ENCODE measurements at regions of chr18 and their contacts with region 1.

Region 1: GRCh38 chr18:34787931-34788532 is 77.9 kb downstream of the DTNA start:
- DNase-seq: peak; percentile 60
- ATAC-seq: peak; percentile 67
- H3K4me3 ChIP-seq: no peak overlapping the region
- H3K27ac ChIP-seq: no peak overlapping the region
- H3K4me1 ChIP-seq: no peaks in the 10 kb centered on the region
- H3K27me3 ChIP-seq: no peaks in the 10 kb centered on the region
- CTCF ChIP-seq: peak; percentile 77
- EP300 ChIP-seq: no peak
- POLR2A ChIP-seq: no peak
- RAD21 ChIP-seq: 0 out of 2 replicates have a peak, but pooled peaks have one; percentile 19

Region 2: DNA sequence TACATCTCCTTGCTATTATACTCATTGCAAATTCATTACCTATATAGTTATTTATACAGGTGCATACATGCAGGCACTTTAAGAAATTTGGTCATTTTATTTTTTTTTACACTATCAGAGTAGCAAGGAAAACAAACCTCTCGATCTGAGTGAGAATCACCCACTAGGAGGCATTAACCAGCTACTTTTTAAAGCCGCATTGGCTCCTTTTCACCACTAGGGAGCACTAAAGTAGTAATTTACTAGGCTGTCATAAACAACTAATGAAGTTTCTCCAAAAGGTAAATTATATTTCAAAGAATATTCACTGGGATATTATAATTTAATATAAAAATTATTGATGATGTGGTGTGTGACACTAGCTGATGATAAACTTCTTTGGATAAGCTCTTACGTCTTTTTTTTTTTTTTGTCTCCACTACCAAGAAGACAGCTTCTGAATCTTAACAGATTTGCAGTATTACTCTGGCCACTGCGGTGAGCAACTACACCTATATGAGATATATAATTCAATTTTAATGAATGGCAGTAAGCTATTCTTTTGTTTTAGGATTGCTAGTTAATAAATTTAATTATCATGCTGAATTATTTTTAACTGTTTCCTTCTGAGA is 665.2 kb before region 1 on chr18:
- CTCF ChIA-PET with region 1: interaction called, 3 read pairs
- POLR2A ChIA-PET with region 1: no interaction called
- in situ Hi-C with region 1: no loop called
- intact Hi-C with region 1: loop called (anchors 5 kb)
- DNase-seq: peak; percentile 36
- ATAC-seq: peak; percentile 73
- H3K4me3 ChIP-seq: no peak overlapping the region
- H3K27ac ChIP-seq: no peak overlapping the region
- H3K4me1 ChIP-seq: peaks cover 13% of the 10 kb centered on the region
- H3K27me3 ChIP-seq: no peaks in the 10 kb centered on the region
- CTCF ChIP-seq: peak; percentile 65
- EP300 ChIP-seq: no peak
- POLR2A ChIP-seq: no peak
- RAD21 ChIP-seq: no peak

Region 3: GRCh38 chr18:34352385-34353163 is 435.5 kb before region 1 on chr18:
- CTCF ChIA-PET with region 1: interaction called, 3 read pairs
- POLR2A ChIA-PET with region 1: no interaction called
- in situ Hi-C with region 1: loop called (anchors 5 kb)
- intact Hi-C with region 1: loop called (anchors 1 kb)
- DNase-seq: peak; percentile 22
- ATAC-seq: no peak
- H3K4me3 ChIP-seq: no peak overlapping the region
- H3K27ac ChIP-seq: no peak overlapping the region
- H3K4me1 ChIP-seq: no peaks in the 10 kb centered on the region
- H3K27me3 ChIP-seq: no peaks in the 10 kb centered on the region
- CTCF ChIP-seq: peak; percentile 39
- EP300 ChIP-seq: no peak
- POLR2A ChIP-seq: no peak
- RAD21 ChIP-seq: no peak

Region 4: GRCh38 chr18:34595673-34596303 is 192.2 kb before region 1 on chr18:
- CTCF ChIA-PET with region 1: interaction called, 7 read pairs
- POLR2A ChIA-PET with region 1: no interaction called
- in situ Hi-C with region 1: no loop called
- intact Hi-C with region 1: loop called (anchors 5 kb)
- DNase-seq: peak; percentile 20
- ATAC-seq: no peak
- H3K4me3 ChIP-seq: no peak overlapping the region
- H3K27ac ChIP-seq: no peak overlapping the region
- H3K4me1 ChIP-seq: no peaks in the 10 kb centered on the region
- H3K27me3 ChIP-seq: no peaks in the 10 kb centered on the region
- CTCF ChIP-seq: 0 out of 2 replicates have a peak, but pooled peaks have one; percentile 38
- EP300 ChIP-seq: no peak
- POLR2A ChIP-seq: no peak
- RAD21 ChIP-seq: no peak

Region 5: GRCh38 chr18:34661464-34662111 is 126.4 kb before region 1 on chr18:
- CTCF ChIA-PET with region 1: interaction called, 9 read pairs
- POLR2A ChIA-PET with region 1: no interaction called
- in situ Hi-C with region 1: loop called (anchors 10 kb)
- intact Hi-C with region 1: loop called (anchors 1 kb)
- DNase-seq: peak; percentile 48
- ATAC-seq: peak; percentile 90
- H3K4me3 ChIP-seq: no peak overlapping the region
- H3K27ac ChIP-seq: no peak overlapping the region
- H3K4me1 ChIP-seq: peaks cover 11% of the 10 kb centered on the region
- H3K27me3 ChIP-seq: no peaks in the 10 kb centered on the region
- CTCF ChIP-seq: peak; percentile 73
- EP300 ChIP-seq: no peak
- POLR2A ChIP-seq: no peak
- RAD21 ChIP-seq: no peak; the same call in 1 of the 2 replicates

Region 6: DNA sequence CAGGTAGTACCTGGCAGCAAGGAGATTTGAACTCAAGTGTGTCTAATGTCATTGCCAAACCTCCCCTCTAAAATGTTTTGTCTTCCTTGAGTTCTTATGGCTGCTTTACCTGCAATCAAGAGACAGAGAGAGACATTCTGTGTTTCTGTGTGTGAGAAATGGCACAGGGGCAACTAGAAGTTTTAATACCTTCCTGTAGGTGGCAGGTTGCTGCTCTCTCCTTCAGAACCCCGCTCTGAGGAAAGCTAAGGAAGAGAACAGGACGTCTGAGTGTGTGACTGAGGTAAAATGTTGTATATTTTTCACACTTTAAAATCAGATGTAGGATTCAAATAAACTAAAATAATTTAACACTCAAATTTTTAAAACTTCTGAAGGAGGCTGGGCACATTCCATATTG is 58.8 kb before region 1 on chr18:
- CTCF ChIA-PET with region 1: interaction called, 4 read pairs
- POLR2A ChIA-PET with region 1: no interaction called
- in situ Hi-C with region 1: no loop called
- intact Hi-C with region 1: loop called (anchors 2 kb)
- DNase-seq: peak; percentile 23
- ATAC-seq: peak; percentile 93
- H3K4me3 ChIP-seq: no peak overlapping the region
- H3K27ac ChIP-seq: no peak overlapping the region
- H3K4me1 ChIP-seq: no peaks in the 10 kb centered on the region
- H3K27me3 ChIP-seq: no peaks in the 10 kb centered on the region; a peak in 1 of 5 replicates
- CTCF ChIP-seq: peak; percentile 52
- EP300 ChIP-seq: no peak
- POLR2A ChIP-seq: no peak
- RAD21 ChIP-seq: no peak

Region 7: DNA sequence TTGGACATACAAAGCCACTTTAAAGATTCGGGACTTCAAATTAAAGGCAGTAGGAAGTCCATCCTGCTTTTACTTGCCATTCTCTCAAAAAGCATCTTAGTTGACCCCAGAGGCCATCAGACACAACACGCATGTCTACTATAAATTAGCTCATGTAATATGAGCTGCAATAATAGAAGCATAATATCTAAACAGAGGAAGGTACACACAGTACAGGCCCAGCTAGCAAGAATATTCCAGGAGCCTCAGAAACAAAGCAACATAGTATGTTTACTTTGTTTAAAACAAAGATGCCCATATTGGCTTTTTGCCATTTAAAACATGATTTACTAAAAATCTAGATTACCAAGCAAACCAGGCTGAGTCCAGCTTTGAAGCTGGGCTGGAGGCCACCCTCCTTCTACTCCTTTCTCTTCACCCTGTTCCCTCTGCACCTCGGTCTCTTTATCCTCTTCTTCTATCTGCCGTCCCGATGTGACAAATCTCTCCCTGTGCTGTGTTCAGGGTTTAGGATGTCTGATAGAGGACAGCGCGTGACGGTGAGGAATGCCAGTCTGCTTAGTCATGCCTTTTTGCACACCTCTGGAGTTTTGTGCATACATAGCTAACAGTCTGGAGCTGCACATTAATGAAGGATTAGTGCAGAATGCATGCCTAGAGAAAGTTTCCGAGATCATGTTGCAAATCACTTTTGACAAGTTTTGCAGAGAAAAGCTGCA is 49.7 kb before region 1 on chr18:
- CTCF ChIA-PET with region 1: no interaction called
- POLR2A ChIA-PET with region 1: no interaction called
- in situ Hi-C with region 1: no loop called
- intact Hi-C with region 1: loop called (anchors 5 kb)
- DNase-seq: peak; percentile 39
- ATAC-seq: peak; percentile 51; the same call in 2 of the 3 replicates
- H3K4me3 ChIP-seq: no peak overlapping the region
- H3K27ac ChIP-seq: no peak overlapping the region
- H3K4me1 ChIP-seq: peaks cover 8% of the 10 kb centered on the region
- H3K27me3 ChIP-seq: no peaks in the 10 kb centered on the region
- CTCF ChIP-seq: no peak
- EP300 ChIP-seq: no peak
- POLR2A ChIP-seq: no peak
- RAD21 ChIP-seq: no peak

Region 8: DNA sequence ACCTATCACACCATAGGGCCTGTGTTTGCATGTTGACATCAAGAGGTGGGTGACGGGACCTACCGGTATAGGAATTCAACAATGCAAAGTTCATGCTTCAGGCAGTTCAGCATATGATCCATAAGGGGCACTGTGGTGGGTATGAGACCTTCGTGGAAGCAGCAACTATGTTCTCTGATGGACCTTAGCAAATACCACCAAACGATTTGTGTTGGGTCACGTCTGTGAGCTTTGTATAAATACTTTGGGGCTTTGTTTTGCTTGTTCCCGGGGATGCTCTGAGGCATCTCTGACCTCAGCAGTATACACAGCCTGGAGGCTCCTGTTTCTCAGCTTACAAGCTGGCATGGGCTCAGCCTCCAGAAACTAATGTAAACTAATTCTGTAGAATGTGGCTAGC is 33.7 kb after region 1 on chr18:
- CTCF ChIA-PET with region 1: no interaction called
- POLR2A ChIA-PET with region 1: no interaction called
- in situ Hi-C with region 1: no loop called
- intact Hi-C with region 1: no loop called
- DNase-seq: peak; percentile 38
- ATAC-seq: peak; percentile 95
- H3K4me3 ChIP-seq: no peak overlapping the region
- H3K27ac ChIP-seq: no peak overlapping the region
- H3K4me1 ChIP-seq: peaks cover 7% of the 10 kb centered on the region; the same call in 1 of the 2 replicates
- H3K27me3 ChIP-seq: no peaks in the 10 kb centered on the region
- CTCF ChIP-seq: no peak
- EP300 ChIP-seq: no peak
- POLR2A ChIP-seq: no peak
- RAD21 ChIP-seq: no peak

Region 9: DNA sequence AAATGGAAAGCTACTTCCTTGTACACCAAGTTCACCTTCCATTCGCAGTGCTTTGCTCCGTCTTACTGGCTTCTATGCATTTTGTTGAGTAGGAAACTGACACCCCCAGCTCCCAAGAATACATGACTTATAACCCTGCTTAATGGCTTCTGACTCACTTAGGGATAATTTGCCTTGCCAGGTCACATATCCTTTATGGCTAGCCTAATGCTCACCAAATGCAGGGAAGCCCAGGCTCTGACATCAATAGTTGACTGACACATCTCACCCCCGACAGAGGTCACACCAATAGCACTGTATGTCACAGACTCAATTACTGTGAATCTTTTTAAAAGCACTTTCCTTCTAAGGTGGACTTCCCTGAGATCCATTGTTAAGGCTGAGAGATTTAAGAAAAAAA is 69.3 kb after region 1 on chr18:
- CTCF ChIA-PET with region 1: no interaction called
- POLR2A ChIA-PET with region 1: no interaction called
- in situ Hi-C with region 1: no loop called
- intact Hi-C with region 1: no loop called
- DNase-seq: no peak
- ATAC-seq: no peak
- H3K4me3 ChIP-seq: no peak overlapping the region
- H3K27ac ChIP-seq: no peak overlapping the region
- H3K4me1 ChIP-seq: no peaks in the 10 kb centered on the region
- H3K27me3 ChIP-seq: no peaks in the 10 kb centered on the region
- CTCF ChIP-seq: no peak
- EP300 ChIP-seq: no peak
- POLR2A ChIP-seq: no peak
- RAD21 ChIP-seq: no peak

Measured in HepG2 (cell line).